Right lobe of liver (tissue), 6 donors: ENCODE measurements at regions of chr17 and their contacts with region 1.

Region 1: DNA sequence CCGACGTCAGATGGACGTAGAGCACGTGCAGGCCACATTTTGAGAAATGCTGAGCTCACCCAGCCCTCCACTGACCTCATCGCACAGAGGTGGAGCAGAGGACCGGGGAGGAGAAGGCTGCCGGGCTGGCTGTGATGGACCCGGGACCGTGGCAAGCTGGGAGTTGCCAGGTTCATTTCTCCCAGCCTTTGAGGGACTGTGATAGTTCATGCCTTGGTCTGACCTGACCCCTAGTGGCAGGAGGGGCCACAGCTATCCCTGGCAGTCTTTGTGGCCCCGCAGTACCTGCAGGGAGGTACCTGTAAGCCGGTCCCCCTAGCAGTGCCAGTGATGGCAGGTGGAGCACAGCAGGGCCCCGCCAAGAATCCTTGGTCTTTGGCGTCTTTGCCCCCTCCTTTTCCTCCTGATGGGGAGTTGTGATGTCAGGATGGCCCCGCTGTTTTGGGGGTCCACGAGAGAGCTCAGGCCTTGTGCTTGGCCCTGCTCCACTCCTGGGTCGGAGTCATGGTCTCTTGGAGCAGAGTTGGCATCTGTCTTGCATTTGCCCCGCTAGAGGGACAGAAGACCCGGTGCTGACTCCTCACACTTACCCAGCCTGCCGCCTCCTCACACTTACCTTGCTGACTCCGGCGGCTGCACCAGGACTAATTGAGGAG is 50.4 kb downstream of the OR1D5 start:
- DNase-seq: peak; percentile 66 to 77 (median 73)
- ATAC-seq: peak; percentile 92 to 98 (median 94)
- H3K4me3 ChIP-seq: no peak overlapping the region
- H3K27ac ChIP-seq: no peak overlapping the region
- H3K4me1 ChIP-seq: no peaks in the 10 kb centered on the region
- H3K27me3 ChIP-seq: no peaks in the 10 kb centered on the region
- CTCF ChIP-seq: peak; percentile 83 to 93 (median 90)
- POLR2A ChIP-seq: no peak

Region 2: GRCh38 chr17:2828397-2829038 is 184.5 kb before region 1 on chr17:
- intact Hi-C with region 1: loop called in 1 of 2 experiments (anchors 5 kb)
- DNase-seq: peak; percentile 74 to 81 (median 75)
- ATAC-seq: peak; percentile 92 to 98 (median 94)
- H3K4me3 ChIP-seq: no peak overlapping the region
- H3K27ac ChIP-seq: no peak overlapping the region
- H3K4me1 ChIP-seq: no peaks in the 10 kb centered on the region
- H3K27me3 ChIP-seq: no peaks in the 10 kb centered on the region
- CTCF ChIP-seq: peak; percentile 85 to 92 (median 90)
- POLR2A ChIP-seq: no peak

Region 3: DNA sequence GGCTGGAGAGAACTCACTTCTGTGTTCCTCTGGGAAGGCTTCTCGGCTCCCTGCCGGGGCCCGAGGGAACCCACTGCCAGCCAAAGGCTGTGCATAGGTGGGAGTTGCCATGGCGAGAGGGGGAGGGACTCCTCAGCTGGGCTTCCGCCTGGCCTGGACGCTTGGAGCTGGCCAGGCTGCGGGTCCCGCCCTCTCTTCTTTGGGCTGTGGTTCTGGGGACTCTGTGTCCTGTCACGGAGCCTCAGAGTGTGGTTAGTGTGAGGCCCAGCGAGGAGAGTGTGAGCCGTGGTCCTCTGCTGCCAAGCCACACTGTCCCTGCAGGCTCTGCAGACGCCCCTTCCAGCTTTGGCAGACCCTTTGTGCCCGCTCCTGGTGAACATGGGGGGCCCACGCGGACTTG is 72.7 kb before region 1 on chr17:
- intact Hi-C with region 1: no loop called
- DNase-seq: no peak
- ATAC-seq: peak in 3 of 4 donors; percentile 22 to 43 (median 25)
- H3K4me3 ChIP-seq: no peak overlapping the region
- H3K27ac ChIP-seq: no peak overlapping the region
- H3K4me1 ChIP-seq: no peaks in the 10 kb centered on the region
- H3K27me3 ChIP-seq: no peaks in the 10 kb centered on the region
- CTCF ChIP-seq: no peak
- POLR2A ChIP-seq: no peak

Region 4: DNA sequence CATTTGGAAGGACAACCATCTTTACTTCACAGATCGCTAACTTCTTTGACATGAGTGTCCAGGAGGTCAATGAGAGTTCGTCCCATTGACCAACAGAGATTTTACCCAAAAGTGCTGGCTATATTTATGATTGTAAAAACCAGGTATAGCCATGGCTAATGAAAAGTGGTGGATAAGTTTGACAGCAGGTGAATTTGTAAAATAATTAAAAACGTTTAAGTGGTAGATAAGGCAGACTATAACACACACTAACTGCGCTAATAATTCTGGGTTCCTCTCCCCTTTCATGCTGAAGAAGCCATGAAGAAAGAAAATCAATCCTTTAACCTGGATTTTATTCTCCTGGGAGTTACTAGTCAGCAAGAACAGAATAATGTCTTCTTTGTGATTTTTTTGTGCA is 184.2 kb after region 1 on chr17 and contains the start of gene OR1A2:
- intact Hi-C with region 1: no loop called
- DNase-seq: no peak
- ATAC-seq: no peak
- H3K4me3 ChIP-seq: no peak within 1 kb of the TSS
- H3K27ac ChIP-seq: no peak within 1 kb of the TSS
- H3K4me1 ChIP-seq: no peaks in the 10 kb centered on the region
- H3K27me3 ChIP-seq: no peaks in the 10 kb centered on the region
- CTCF ChIP-seq: no peak
- POLR2A ChIP-seq: no peak
- total RNA-seq, gene OR1A2: not detected